Left ventricle myocardium inferior (tissue), 1 donor: ENCODE measurements at regions of chr12 and their contacts with region 1.

Region 1: DNA sequence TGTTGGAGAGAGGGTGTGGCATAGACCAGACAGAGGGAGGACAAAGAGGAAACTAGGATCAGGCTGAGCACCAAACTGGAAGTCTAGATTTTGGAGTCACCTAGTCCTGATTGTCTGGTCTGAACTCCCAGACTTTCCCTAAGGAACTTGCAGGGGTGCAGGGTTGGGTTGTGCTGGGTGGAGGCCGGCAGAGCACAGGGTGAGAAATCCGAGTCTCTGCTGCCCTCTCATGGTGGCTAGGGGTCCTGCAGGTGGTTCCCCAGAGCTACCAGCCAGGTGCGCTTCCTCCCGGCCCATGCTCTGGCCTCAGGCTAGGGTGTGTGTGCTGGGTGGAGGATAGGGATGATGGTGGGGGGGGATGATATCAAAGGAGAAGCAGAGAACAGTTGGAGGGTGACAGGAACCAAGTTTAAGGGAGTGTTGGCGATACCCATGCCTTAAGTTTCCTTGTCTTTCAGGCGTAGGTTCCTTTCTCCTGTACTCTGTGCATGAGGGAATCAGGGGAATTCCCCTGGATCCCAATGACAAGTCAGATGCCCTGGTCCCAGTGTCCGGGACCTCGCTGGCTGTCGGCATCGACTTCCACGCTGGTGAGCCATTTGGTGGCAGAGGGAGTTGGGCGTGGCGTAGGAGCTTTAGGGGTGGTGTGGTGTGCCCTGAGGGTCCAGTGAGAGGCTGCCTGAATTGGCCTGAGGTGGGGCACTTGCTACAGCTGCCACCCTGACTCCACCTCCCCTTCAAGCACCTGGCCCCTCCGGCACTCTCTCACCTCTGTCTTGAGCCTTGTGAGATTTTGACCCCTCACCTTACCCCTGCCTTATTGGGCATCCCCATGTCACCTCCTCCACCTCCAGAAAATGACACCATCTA is 33.4 kb upstream of the NXPH4 start:
- DNase-seq: peak; percentile 72
- H3K4me3 ChIP-seq: no peak overlapping the region
- H3K27ac ChIP-seq: no peak overlapping the region
- H3K4me1 ChIP-seq: no peaks in the 10 kb centered on the region
- H3K27me3 ChIP-seq: no peaks in the 10 kb centered on the region
- CTCF ChIP-seq: peak; percentile 90

Region 2: DNA sequence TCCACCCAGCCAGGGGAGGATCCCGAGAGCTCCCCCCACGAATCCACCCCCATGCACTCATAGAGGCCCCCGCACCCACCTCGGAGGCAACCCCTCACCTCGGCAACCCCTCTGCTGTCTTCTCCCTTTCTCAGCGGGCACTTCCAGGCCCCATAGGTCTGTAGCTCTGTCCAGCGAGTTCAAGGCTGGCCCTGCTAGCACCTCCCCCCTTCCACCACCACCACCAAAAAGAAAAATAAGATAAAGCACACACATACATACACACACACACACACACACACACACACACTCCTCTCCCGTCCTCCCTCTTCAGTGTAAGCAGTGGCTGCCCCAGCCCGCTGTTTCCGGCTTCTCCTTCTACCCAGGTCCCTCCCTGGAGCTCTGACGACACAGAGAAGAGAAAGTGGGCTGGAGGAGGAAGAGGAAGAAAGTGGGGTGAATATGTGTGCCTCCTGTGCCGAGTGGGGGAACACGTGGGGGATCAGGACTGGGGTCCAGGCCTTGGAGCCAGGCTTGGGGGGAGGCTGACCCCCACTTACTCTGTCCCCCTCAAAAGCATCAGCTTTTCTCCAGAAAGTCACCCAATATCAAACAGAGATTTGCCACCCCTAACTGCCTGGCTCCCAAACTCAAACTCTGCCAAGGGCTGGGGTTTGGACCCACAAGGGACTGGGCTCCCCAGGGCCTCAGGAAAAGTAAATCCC is 72.0 kb before region 1 on chr12 and contains the start of gene STAT6:
- intact Hi-C with region 1: no loop called
- DNase-seq: peak; percentile 76
- H3K4me3 ChIP-seq: peak within 1 kb of the TSS; percentile 79
- H3K27ac ChIP-seq: peak within 1 kb of the TSS; percentile 98
- H3K4me1 ChIP-seq: peaks cover 57% of the 10 kb centered on the region
- H3K27me3 ChIP-seq: no peaks in the 10 kb centered on the region
- CTCF ChIP-seq: no peak
- total RNA-seq, gene STAT6: 46.2 TPM

Region 3: GRCh38 chr12:57124259-57124877 is 58.8 kb before region 1 on chr12:
- intact Hi-C with region 1: loop called (anchors 5 kb)
- DNase-seq: peak; percentile 52
- H3K4me3 ChIP-seq: no peak overlapping the region
- H3K27ac ChIP-seq: no peak overlapping the region
- H3K4me1 ChIP-seq: peaks cover 20% of the 10 kb centered on the region
- H3K27me3 ChIP-seq: no peaks in the 10 kb centered on the region
- CTCF ChIP-seq: peak; percentile 99

Region 4: DNA sequence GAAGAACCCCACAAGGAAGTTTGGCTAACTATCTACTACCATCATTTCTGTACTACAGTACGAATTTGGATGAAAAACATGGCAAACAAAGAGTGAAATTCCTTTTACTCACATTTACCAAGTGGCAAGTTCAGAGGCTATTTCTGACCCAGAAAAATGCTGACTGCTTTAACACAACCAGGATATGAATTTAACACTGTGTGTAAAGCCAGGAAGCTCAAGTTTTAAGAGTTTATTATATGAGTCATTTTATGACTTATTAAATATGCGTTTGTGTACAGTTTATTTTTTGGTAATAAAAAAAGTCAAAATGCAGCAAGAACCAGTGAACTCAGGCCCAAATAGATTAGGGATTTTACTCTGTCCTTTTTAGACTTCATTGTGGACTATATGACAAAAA is 126.3 kb after region 1 on chr12:
- intact Hi-C with region 1: no loop called
- DNase-seq: no peak
- H3K4me3 ChIP-seq: no peak overlapping the region
- H3K27ac ChIP-seq: peak overlapping the region; percentile 11
- H3K4me1 ChIP-seq: peaks cover 15% of the 10 kb centered on the region
- H3K27me3 ChIP-seq: no peaks in the 10 kb centered on the region
- CTCF ChIP-seq: no peak